ENCODE measurements at regions of chr11 and their contacts with region 1.

Region 1: GRCh38 chr11:86938900-86939880 is 16.0 kb downstream of the FZD4 start:
- DNase-seq: peak; percentile 44
- CTCF ChIP-seq: peak; percentile 65

Region 2: GRCh38 chr11:86784241-86784681 is 154.9 kb before region 1 on chr11:
- in situ Hi-C with region 1: no loop called
- DNase-seq: no peak
- CTCF ChIP-seq: no peak

Region 3: GRCh38 chr11:87097582-87097981 is 158.4 kb after region 1 on chr11:
- in situ Hi-C with region 1: no loop called
- DNase-seq: peak; percentile 62
- CTCF ChIP-seq: peak; percentile 69

Region 4: GRCh38 chr11:87290304-87290922 is 351.2 kb after region 1 on chr11:
- in situ Hi-C with region 1: loop called (anchors 10 kb)
- DNase-seq: peak; percentile 49
- CTCF ChIP-seq: peak; percentile 23